Left lung (tissue), 14 donors: ENCODE measurements at regions of chrX and their contacts with region 1.

Region 1: DNA sequence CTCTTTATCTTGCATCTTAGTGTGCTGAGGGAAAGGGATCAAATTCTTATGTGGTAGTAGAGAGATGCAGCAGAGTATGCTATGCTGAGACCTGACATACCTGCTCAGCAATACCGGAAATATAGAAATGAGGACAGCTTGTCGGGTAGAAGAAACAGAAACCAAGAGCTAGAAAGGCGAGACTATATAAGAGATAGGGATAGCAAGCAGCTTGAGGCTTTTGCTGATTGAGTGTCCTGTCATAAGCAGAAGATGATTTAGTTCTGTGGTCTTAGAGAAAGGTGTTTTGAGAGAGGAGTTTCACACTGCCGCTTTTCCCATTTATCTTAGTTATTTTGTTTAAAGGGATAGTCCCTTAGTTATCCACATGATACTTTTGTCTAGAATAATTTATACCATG is 31.7 kb downstream of the USP9X start:
- DNase-seq: no peak
- ATAC-seq: peak; percentile 52
- H3K4me3 ChIP-seq: no peak overlapping the region
- H3K27ac ChIP-seq: no peak overlapping the region
- H3K4me1 ChIP-seq: peaks cover 0 to 73% of the 10 kb centered on the region in 2 donors
- H3K27me3 ChIP-seq: no peaks in the 10 kb centered on the region
- CTCF ChIP-seq: no peak

Region 2: DNA sequence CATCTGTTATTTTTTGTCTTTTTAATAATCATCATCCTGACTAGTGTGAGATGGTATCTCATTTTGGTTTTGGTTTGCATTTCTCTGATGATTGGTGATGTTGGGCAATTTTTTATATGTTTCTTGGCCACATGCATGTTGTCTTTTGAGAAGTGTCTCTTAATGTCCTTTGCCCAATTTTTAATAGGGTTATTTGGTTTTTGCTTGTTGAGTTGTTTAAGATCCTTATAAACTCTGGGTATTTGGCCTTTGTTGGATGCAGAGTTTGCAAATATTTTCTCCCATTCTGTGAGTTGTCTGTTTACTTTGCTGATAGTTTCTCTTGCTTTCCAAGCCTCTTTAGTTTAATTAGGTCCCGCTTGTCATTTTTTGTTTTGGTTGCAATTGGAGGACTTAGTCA is 229.5 kb before region 1 on chrX:
- intact Hi-C with region 1: loop called in 1 of 2 experiments (anchors 10 kb)
- DNase-seq: no peak
- ATAC-seq: no peak
- H3K4me3 ChIP-seq: no peak overlapping the region
- H3K27ac ChIP-seq: no peak overlapping the region
- H3K4me1 ChIP-seq: no peaks in the 10 kb centered on the region
- H3K27me3 ChIP-seq: peaks cover 0 to 8% of the 10 kb centered on the region in 2 donors
- CTCF ChIP-seq: no peak